ENCODE measurements at regions of chr3 and their contacts with region 1.

Region 1: DNA sequence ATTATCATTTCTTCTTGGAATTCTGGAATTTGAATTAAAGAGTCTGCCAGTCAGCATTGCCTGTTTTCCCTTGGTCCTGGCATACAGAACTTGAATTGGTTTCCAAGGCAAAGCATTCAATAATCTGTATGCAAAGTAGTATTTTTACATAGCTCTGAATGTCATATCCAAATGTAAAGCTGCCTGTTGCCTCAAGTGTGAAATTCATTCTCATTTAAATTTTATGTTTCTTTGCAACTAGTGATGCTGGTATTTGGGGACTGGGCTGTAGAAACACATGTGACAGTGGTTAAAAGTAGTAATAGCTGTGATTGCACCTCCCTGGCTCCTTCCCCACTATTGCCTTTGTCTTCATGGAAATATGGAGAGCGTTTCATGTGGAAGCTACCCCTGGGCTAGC is 743.9 kb upstream of the GOLIM4 start:
- DNase-seq: no peak
- H3K4me3 ChIP-seq: no peak overlapping the region
- H3K27ac ChIP-seq: no peak overlapping the region
- H3K4me1 ChIP-seq: no peaks in the 10 kb centered on the region
- H3K27me3 ChIP-seq: no peaks in the 10 kb centered on the region
- CTCF ChIP-seq: no peak
- POLR2A ChIP-seq: no peak

Region 2: DNA sequence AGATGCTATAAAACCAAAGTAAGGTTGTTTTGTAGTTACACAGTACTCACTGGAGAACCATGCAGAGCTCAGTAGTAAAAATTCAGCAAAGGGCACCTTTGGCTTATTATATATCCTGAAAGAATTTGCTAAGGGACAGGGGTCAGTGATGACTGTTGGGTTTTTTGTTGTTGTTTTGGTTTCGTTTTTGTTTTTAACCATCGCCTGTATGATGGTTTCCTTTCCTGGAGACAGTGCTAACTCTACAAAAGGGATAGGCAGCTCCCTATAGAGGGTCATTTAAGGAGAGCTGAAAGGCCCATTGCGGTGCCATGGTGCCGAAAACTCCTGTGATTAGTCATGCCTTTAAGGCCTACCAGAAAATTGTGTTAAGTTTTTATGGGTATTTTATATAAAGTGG is 625.7 kb before region 1 on chr3:
- intact Hi-C with region 1: loop called in 1 of 2 experiments (anchors 5 kb)
- DNase-seq: no peak
- H3K4me3 ChIP-seq: no peak overlapping the region
- H3K27ac ChIP-seq: no peak overlapping the region
- H3K4me1 ChIP-seq: no peaks in the 10 kb centered on the region
- H3K27me3 ChIP-seq: no peaks in the 10 kb centered on the region
- CTCF ChIP-seq: no peak
- POLR2A ChIP-seq: no peak